ENCODE measurements at regions of chr14 and their contacts with region 1.

Region 1: DNA sequence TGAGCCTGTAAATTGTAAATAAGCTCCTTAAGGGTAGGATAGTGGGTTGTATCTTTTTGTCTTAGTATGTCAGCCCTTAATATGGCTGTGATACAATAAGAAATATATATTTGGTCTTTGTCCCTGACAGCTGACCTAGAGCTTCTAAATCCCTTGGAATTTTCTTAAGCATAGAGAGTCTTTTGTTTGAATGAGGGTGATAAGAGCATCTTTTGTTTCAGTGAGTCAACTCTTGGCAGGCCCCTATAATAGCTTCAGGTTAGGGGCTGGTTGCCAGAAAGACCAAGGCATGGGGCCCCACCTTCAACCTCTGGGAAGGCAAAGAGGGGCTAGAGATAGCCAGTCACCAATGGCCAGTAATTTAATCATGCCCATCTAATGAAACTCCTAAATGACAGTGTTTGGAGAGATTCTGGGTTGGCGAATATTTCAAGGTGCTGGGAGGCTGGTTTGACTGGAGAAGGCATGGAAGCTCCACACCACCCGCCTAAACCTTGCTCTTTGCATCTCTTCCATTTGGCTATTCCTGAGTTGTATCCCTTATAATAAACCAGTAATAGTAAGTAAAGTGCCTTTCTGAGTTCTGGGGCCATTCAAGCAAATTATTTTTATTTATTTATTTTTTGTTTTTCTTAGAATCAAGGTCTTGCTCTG is 10.5 kb downstream of the PALS1 start:
- DNase-seq: peak; percentile 32
- H3K4me3 Mint-ChIP-seq: no peak overlapping the region
- H3K27ac Mint-ChIP-seq: no peak overlapping the region
- H3K4me1 Mint-ChIP-seq: peaks cover 58% of the 10 kb centered on the region
- H3K27me3 Mint-ChIP-seq: no peaks in the 10 kb centered on the region
- CTCF ChIP-seq: no peak

Region 2: GRCh38 chr14:66955159-66955558 is 296.5 kb before region 1 on chr14:
- CTCF ChIA-PET with region 1: no interaction called
- intact Hi-C with region 1: no loop called
- DNase-seq: no peak
- H3K4me3 Mint-ChIP-seq: no peak overlapping the region
- H3K27ac Mint-ChIP-seq: no peak overlapping the region
- H3K4me1 Mint-ChIP-seq: no peaks in the 10 kb centered on the region
- H3K27me3 Mint-ChIP-seq: no peaks in the 10 kb centered on the region
- CTCF ChIP-seq: no peak

Region 3: DNA sequence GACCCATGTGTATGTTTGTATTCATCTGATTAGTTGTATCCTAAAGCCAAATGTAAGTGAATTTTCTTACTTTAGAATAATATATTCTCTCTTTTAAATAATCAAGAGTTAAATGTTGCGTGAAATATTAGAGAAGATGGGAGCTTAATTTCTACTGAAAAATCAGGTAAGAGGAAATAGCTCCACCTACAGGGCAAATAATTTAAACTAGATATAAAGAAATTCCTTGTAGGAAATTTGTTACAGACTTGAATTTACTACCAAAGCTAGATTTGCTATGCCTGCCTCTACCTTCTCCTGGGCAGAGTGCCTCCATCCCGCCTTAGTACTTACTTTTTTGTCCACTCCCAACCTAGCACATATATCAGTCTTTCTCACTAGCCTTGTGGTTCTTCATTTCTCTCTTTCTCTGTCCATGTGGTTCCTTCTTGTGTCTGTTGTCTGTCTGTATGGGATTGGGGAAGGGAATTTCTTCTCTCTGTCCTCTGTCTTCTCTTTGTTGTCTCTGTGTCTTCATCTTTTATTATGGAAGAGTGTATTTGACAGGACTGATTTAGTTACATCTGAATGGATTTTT is 34.3 kb after region 1 on chr14:
- CTCF ChIA-PET with region 1: interaction called, 5 read pairs
- intact Hi-C with region 1: loop called (anchors 2 kb)
- DNase-seq: no peak
- H3K4me3 Mint-ChIP-seq: no peak overlapping the region
- H3K27ac Mint-ChIP-seq: no peak overlapping the region
- H3K4me1 Mint-ChIP-seq: no peaks in the 10 kb centered on the region
- H3K27me3 Mint-ChIP-seq: no peaks in the 10 kb centered on the region
- CTCF ChIP-seq: peak; percentile 47

Measured in Calu3 (cell line).